Naive thymus-derived CD4-positive, alpha-beta T cell (primary cell): ENCODE measurements at regions of chrX and their contacts with region 1.

Region 1: GRCh38 chrX:47560831-47561652 is at the start of gene ARAF:
- DNase-seq: peak; percentile 78 to 98 (median 96)
- ATAC-seq: peak; percentile 92
- H3K4me3 ChIP-seq: peak within 1 kb of the TSS; percentile 92
- H3K4me3 Mint-ChIP-seq: peak within 1 kb of the TSS; percentile 85 to 98 (median 92)
- H3K27ac ChIP-seq: peak within 1 kb of the TSS; percentile 92
- H3K27ac Mint-ChIP-seq: peak within 1 kb of the TSS; percentile 96 to 100 (median 97)
- H3K4me1 ChIP-seq: peaks cover 10 to 18% of the 10 kb centered on the region in 2 donors
- H3K4me1 Mint-ChIP-seq: peaks cover 12 to 58% (median 43%) of the 10 kb centered on the region in 7 donors
- H3K27me3 ChIP-seq: no peaks in the 10 kb centered on the region
- H3K27me3 Mint-ChIP-seq: no peaks in the 10 kb centered on the region
- total RNA-seq, gene ARAF: 87.3 to 130 (median 118) TPM

Region 2: DNA sequence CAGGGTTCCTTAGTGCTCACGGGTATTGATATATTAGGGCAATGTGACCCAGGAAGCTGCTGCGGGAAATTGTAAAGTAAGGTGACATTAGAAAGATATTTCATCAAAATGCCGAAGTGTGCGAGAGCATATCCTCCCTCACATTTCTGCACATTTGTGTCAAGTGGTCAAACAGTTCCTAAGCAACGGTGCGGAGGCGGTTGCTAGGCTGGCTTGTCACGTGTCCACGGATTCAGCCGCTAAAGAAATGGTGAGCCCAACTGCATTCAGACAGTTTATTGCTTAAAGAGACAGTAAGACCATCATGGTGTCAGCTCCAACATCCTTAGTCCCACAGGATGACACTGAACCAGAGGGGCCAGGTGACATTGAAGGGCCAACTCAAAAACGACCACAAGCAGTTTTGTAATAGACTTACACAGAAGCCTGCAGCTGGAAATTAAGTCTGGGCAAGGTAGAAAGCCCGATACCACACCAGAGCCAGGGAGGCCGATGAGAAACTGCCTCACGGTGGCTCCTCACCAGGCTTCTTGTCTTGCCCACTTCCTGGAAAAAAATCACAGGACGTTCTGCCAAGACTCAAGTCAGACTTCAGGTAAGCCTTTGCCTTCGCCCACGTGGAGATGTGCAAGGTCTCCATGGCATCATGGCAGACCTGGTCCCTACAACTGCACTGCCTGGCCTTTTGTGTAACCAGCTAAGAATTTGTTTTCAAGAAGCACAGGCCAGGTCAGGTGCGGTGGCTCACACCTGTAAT is 277.8 kb before region 1 on chrX:
- CTCF ChIA-PET with region 1: no interaction called
- POLR2A ChIA-PET with region 1: no interaction called
- intact Hi-C with region 1: no loop called
- DNase-seq: no peak
- ATAC-seq: no peak
- H3K4me3 ChIP-seq: no peak overlapping the region
- H3K4me3 Mint-ChIP-seq: peak overlapping the region in 1 of 10 donors; percentile 14
- H3K27ac ChIP-seq: no peak overlapping the region
- H3K27ac Mint-ChIP-seq: no peak overlapping the region
- H3K4me1 ChIP-seq: no peaks in the 10 kb centered on the region
- H3K4me1 Mint-ChIP-seq: peaks cover 0 to 4% (median 2%) of the 10 kb centered on the region in 7 donors
- H3K27me3 ChIP-seq: no peaks in the 10 kb centered on the region
- H3K27me3 Mint-ChIP-seq: no peaks in the 10 kb centered on the region

Region 3: DNA sequence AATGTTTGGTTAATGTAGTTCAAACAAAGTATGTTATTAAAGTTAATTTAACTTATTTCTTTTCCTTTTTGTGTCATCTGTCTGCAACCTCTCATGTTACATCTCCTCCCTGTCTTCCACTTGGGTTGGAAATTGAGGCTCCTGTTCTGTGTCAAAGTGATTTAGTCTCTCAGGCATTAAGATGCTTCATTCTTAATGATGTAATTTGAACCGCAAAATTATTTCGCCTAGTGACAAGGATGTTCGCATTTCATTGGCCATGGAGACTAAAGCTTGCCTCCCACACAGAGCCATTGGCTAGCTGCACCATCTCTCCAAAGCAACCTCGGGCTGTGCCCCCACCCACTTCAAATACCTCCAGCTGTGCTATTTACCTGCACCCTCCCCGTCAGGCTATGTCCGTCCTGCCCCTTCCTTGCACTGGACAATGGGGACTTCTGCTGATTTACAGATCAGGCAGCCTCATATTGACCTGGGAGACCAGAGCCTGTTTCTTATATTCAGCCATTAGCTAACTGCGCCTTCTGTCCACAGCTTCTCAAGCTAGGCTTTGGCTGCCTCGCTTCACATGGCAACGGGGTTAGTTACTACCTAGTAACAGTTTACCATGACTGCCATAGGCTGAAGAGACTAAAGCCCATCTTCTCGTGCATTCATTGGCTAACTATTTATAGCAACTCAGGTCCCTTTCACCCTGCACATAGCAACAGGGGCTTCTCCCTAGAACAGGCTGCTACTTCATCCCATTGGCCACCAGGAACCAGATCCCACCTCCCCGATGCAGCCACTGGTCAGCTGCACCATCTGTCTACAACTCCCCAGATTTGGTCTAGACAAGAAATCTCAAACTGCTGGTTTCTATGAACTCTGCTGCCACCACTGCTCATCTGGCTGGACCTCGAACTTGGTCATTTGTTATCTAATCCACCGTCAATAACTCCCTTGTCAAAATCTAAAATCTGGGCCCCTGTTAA is 199.2 kb before region 1 on chrX:
- CTCF ChIA-PET with region 1: no interaction called
- POLR2A ChIA-PET with region 1: no interaction called
- intact Hi-C with region 1: loop called in 1 of 2 experiments (anchors 2 kb)
- DNase-seq: peak in 3 of 9 donors; percentile 8 to 16 (median 10)
- ATAC-seq: peak; percentile 75
- H3K4me3 ChIP-seq: no peak overlapping the region
- H3K4me3 Mint-ChIP-seq: peak overlapping the region in 5 of 10 donors; percentile 3 to 29 (median 24)
- H3K27ac ChIP-seq: no peak overlapping the region
- H3K27ac Mint-ChIP-seq: peak overlapping the region in 4 of 9 donors; percentile 15 to 40 (median 31)
- H3K4me1 ChIP-seq: peaks cover 6 to 9% of the 10 kb centered on the region in 2 donors
- H3K4me1 Mint-ChIP-seq: peaks cover 10 to 48% (median 30%) of the 10 kb centered on the region in 7 donors
- H3K27me3 ChIP-seq: no peaks in the 10 kb centered on the region
- H3K27me3 Mint-ChIP-seq: no peaks in the 10 kb centered on the region

Region 4: DNA sequence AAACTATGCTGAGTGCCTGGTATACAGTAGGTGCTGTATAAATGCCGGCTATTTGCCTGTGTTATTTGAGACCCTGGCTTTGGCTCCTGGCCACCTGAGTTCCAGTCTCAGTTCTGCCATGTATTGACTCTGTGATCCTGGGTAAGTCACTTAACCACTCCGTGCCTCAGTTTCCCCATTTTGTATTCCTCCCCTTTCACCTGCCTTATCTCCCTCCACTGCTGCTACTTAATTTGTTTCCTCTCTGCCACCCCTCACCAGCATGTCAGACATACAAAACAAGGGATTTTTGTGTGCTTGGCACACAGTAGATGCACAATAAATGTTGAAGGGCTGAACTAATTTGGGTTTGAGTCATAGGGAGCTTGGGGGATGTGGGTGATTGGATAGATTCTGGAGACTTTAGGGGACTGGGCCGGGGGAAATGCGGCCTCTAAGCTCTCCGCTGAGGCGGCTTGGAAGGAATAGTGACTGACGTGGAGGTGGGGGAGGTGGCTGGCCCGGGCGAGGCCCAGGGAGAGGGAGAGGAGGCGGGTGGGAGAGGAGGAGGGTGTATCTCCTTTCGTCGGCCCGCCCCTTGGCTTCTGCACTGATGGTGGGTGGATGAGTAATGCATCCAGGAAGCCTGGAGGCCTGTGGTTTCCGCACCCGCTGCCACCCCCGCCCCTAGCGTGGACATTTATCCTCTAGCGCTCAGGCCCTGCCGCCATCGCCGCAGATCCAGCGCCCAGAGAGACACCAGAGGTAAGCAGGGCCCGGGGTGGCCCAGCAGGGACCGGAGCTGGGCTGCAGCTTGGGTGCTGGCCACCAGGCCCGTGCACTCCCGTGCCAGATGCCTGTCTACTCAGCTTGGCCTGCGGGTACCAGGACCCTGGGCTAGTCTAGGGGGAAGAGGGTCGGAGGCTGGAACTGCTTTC is 20.9 kb after region 1 on chrX and contains the start of gene TIMP1:
- CTCF ChIA-PET with region 1: no interaction called
- POLR2A ChIA-PET with region 1: interaction called, 6 read pairs
- intact Hi-C with region 1: loop called in 1 of 2 experiments (anchors 1 kb)
- DNase-seq: peak in 8 of 9 donors; percentile 36 to 80 (median 46)
- ATAC-seq: peak; percentile 93
- H3K4me3 ChIP-seq: peak within 1 kb of the TSS; percentile 52
- H3K4me3 Mint-ChIP-seq: peak within 1 kb of the TSS; percentile 65 to 88 (median 76)
- H3K27ac ChIP-seq: peak within 1 kb of the TSS; percentile 58
- H3K27ac Mint-ChIP-seq: peak within 1 kb of the TSS; percentile 57 to 90 (median 82)
- H3K4me1 ChIP-seq: peaks cover 9 to 17% of the 10 kb centered on the region in 2 donors
- H3K4me1 Mint-ChIP-seq: peaks cover 15 to 40% (median 24%) of the 10 kb centered on the region in 7 donors
- H3K27me3 ChIP-seq: no peaks in the 10 kb centered on the region
- H3K27me3 Mint-ChIP-seq: no peaks in the 10 kb centered on the region
- total RNA-seq, gene TIMP1: 47.0 to 117 (median 85.2) TPM

Region 5: GRCh38 chrX:47644557-47645091 is 83.6 kb after region 1 on chrX:
- CTCF ChIA-PET with region 1: interaction called, 3 read pairs
- POLR2A ChIA-PET with region 1: interaction called, 11 read pairs
- intact Hi-C with region 1: loop called (anchors 1 kb)
- DNase-seq: no peak
- ATAC-seq: peak; percentile 60
- H3K4me3 ChIP-seq: no peak overlapping the region
- H3K4me3 Mint-ChIP-seq: peak overlapping the region in 2 of 10 donors; percentile 36 to 39
- H3K27ac ChIP-seq: peak overlapping the region; percentile 21
- H3K27ac Mint-ChIP-seq: peak overlapping the region in 3 of 9 donors; percentile 37 to 56 (median 51)
- H3K4me1 ChIP-seq: peaks cover 9 to 22% of the 10 kb centered on the region in 2 donors
- H3K4me1 Mint-ChIP-seq: peaks cover 31 to 64% (median 51%) of the 10 kb centered on the region in 7 donors
- H3K27me3 ChIP-seq: no peaks in the 10 kb centered on the region
- H3K27me3 Mint-ChIP-seq: no peaks in the 10 kb centered on the region

Region 6: DNA sequence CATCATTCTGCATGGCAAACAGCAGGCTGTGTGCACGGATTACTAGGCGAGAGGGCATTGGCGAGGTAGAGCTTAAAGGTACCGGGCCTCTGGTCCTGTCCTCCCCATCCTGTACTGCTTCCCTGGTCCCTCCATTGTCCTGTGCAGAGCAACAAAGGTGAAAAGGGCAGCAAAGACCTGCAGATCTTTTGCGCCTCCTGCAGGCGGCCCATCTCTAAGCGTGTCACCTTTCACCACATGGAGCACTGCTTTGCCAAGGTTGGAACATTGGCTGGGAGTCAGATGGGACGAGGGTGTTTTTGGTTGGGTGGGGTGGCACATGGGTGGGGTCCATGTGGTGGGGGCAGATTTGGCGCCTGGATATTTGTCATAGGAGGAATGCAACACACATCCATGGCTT is 162.6 kb after region 1 on chrX:
- CTCF ChIA-PET with region 1: no interaction called
- POLR2A ChIA-PET with region 1: no interaction called
- intact Hi-C with region 1: no loop called
- DNase-seq: peak in 1 of 9 donors; percentile 22
- ATAC-seq: no peak
- H3K4me3 ChIP-seq: no peak overlapping the region
- H3K4me3 Mint-ChIP-seq: peak overlapping the region in 1 of 10 donors; percentile 10
- H3K27ac ChIP-seq: no peak overlapping the region
- H3K27ac Mint-ChIP-seq: no peak overlapping the region
- H3K4me1 ChIP-seq: no peaks in the 10 kb centered on the region
- H3K4me1 Mint-ChIP-seq: peaks cover 0 to 2% (median 0%) of the 10 kb centered on the region in 7 donors
- H3K27me3 ChIP-seq: no peaks in the 10 kb centered on the region
- H3K27me3 Mint-ChIP-seq: peaks cover 0 to 16% (median 0%) of the 10 kb centered on the region in 5 donors

Region 7: GRCh38 chrX:47751670-47752069 is 190.6 kb after region 1 on chrX:
- CTCF ChIA-PET with region 1: no interaction called
- POLR2A ChIA-PET with region 1: no interaction called
- intact Hi-C with region 1: loop called in 1 of 2 experiments (anchors 5 kb)
- DNase-seq: peak in 5 of 9 donors; percentile 0 to 28 (median 13)
- ATAC-seq: peak; percentile 42
- H3K4me3 ChIP-seq: no peak overlapping the region
- H3K4me3 Mint-ChIP-seq: no peak overlapping the region
- H3K27ac ChIP-seq: no peak overlapping the region
- H3K27ac Mint-ChIP-seq: peak overlapping the region in 1 of 9 donors; percentile 15
- H3K4me1 ChIP-seq: no peaks in the 10 kb centered on the region
- H3K4me1 Mint-ChIP-seq: peaks cover 0 to 3% (median 0%) of the 10 kb centered on the region in 7 donors
- H3K27me3 ChIP-seq: no peaks in the 10 kb centered on the region
- H3K27me3 Mint-ChIP-seq: peaks cover 0 to 4% (median 0%) of the 10 kb centered on the region in 5 donors

Region 8: DNA sequence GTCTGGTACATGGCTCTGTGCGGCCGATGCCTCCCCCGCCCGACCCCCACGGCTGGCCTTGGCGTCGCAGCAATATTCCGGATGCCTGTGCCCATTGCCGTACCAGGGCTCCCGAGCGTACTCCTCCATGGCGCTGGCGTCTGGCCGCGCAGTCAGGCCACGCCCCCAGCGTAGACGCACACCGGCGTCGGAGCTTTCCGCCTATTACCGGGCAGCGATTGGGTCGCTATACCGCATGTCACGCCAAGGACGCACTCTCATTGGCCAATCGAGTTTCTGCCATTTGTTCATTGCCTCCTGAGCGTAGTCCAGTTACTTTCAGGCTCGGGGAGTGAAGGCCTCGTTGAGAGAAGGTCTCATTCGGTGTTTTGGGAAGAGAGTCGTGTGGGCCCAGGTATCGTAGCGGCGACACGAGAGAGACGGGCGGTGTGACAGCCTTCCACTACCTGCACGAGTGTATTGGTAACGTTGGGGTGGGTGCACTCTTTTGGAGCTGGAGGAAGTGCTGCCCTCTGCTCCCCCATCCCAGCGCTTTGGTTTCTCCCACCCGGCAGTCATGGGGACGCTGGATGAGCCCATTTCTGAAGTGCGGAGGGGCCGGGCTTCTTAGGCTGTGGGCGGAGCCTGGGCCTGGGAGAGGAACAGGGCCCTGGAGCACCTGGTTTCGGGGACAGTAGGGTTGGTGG is 1336.7 kb after region 1 on chrX and contains the starts of genes PQBP1 and TIMM17B:
- CTCF ChIA-PET with region 1: no interaction called
- POLR2A ChIA-PET with region 1: no interaction called
- intact Hi-C with region 1: loop called in 1 of 2 experiments (anchors 5 kb)
- DNase-seq: peak; percentile 71 to 93 (median 89)
- ATAC-seq: peak; percentile 92
- H3K4me3 ChIP-seq: peak within 1 kb of the TSS; percentile 91
- H3K4me3 Mint-ChIP-seq: peak within 1 kb of the TSS; percentile 83 to 100 (median 91)
- H3K27ac ChIP-seq: peak within 1 kb of the TSS; percentile 98
- H3K27ac Mint-ChIP-seq: peak within 1 kb of the TSS; percentile 89 to 98 (median 94)
- H3K4me1 ChIP-seq: peaks cover 12 to 16% of the 10 kb centered on the region in 2 donors
- H3K4me1 Mint-ChIP-seq: peaks cover 6 to 42% (median 24%) of the 10 kb centered on the region in 7 donors
- H3K27me3 ChIP-seq: no peaks in the 10 kb centered on the region
- H3K27me3 Mint-ChIP-seq: no peaks in the 10 kb centered on the region
- total RNA-seq, gene PQBP1: 64.1 to 89.5 (median 74.6) TPM
- total RNA-seq, gene TIMM17B: 41.1 to 46.6 (median 44.2) TPM